Activated B cell treated with CpG ODN at 0.5 μM for 24 hours (primary cell): ENCODE measurements at regions of chr6 and their contacts with region 1.

Region 1: GRCh38 chr6:52653151-52653550 is 17.8 kb upstream of the TMEM14A start:
- DNase-seq: no peak
- ATAC-seq: no peak
- H3K4me3 Mint-ChIP-seq: no peak overlapping the region
- H3K27ac Mint-ChIP-seq: no peak overlapping the region
- H3K4me1 Mint-ChIP-seq: peaks cover 6% of the 10 kb centered on the region
- H3K27me3 Mint-ChIP-seq: peaks cover 24% of the 10 kb centered on the region
- CTCF ChIP-seq: no peak

Region 2: GRCh38 chr6:52537001-52537753 is 116.0 kb before region 1 on chr6:
- CTCF ChIA-PET with region 1: no interaction called
- POLR2A ChIA-PET with region 1: no interaction called
- intact Hi-C with region 1: no loop called
- DNase-seq: no peak
- ATAC-seq: peak; percentile 34
- H3K4me3 Mint-ChIP-seq: no peak overlapping the region
- H3K27ac Mint-ChIP-seq: peak overlapping the region; percentile 30
- H3K4me1 Mint-ChIP-seq: peaks cover 21% of the 10 kb centered on the region
- H3K27me3 Mint-ChIP-seq: no peaks in the 10 kb centered on the region
- CTCF ChIP-seq: no peak

Region 3: GRCh38 chr6:52670502-52671409 is 17.6 kb after region 1 on chr6 and contains the start of gene TMEM14A:
- CTCF ChIA-PET with region 1: interaction called, 7 read pairs
- POLR2A ChIA-PET with region 1: no interaction called
- intact Hi-C with region 1: loop called (anchors 2 kb)
- DNase-seq: peak; percentile 88
- ATAC-seq: peak; percentile 97
- H3K4me3 Mint-ChIP-seq: peak within 1 kb of the TSS; percentile 86
- H3K27ac Mint-ChIP-seq: peak within 1 kb of the TSS; percentile 69
- H3K4me1 Mint-ChIP-seq: peaks cover 39% of the 10 kb centered on the region
- H3K27me3 Mint-ChIP-seq: no peaks in the 10 kb centered on the region
- CTCF ChIP-seq: no peak
- total RNA-seq, gene TMEM14A: 6.6 and 7.7 TPM in 2 replicates